ENCODE measurements at regions of chr4 and their contacts with region 1.

Region 1: DNA sequence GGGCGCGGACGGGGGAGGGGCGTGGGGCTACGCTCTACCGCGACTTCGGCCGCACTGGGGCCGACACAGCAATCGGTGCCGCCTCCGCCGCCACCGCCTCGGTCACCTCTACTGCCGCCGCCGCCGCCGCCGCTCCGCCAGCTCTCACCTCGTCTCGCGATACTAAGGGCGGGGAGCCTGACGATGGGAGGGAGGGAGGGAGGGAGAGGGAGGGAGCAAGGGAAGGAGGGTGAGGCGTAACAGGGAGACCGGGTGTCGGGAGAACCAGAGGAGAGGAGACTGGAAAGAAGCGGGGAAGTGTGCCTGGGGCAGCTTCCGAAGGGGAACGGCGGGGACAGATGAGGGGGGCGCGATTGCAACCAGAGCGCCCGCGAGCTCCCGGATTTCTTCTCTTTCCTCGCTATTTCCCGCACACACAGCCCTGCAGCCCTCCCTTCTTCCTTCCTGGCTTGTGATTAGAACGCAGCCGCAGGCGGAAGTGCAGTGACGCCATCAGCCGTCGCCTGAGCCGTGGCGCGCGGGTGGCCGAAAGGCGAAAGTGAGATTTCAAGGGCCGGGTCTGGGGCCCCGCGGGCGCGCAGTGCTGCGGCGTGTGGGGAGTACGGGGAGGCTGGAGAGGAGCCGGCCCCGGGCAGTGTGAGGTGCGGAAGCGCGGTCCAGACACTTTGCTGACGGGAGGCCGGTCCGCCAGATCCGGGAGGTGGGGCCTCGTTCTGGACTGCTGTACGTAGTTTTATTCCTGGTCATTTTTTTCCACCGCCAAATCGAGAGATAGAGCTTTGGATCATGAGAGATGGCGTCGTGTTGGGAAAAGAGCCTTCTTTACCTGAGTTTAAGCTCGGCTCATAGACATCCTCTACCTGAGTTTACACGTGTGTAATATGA is at the start of gene ANKRD17:
- DNase-seq: peak; percentile 77 to 95 (median 86)
- ATAC-seq: peak; percentile 74 to 80 (median 77)
- H3K4me3 ChIP-seq: peak within 1 kb of the TSS; percentile 73 to 94
- H3K4me3 Mint-ChIP-seq: peak within 1 kb of the TSS; percentile 90 to 99 (median 99)
- H3K27ac ChIP-seq: peak within 1 kb of the TSS; percentile 93
- H3K27ac Mint-ChIP-seq: peak within 1 kb of the TSS; percentile 100
- H3K4me1 ChIP-seq: peaks cover 19 to 29% of the 10 kb centered on the region in 2 experiments
- H3K4me1 Mint-ChIP-seq: peaks cover 65 to 73% (median 69%) of the 10 kb centered on the region in 3 donors
- H3K27me3 ChIP-seq: no peaks in the 10 kb centered on the region
- H3K27me3 Mint-ChIP-seq: no peaks in the 10 kb centered on the region
- total RNA-seq, gene ANKRD17: 48.6 to 63.8 (median 51.8) TPM

Region 2: DNA sequence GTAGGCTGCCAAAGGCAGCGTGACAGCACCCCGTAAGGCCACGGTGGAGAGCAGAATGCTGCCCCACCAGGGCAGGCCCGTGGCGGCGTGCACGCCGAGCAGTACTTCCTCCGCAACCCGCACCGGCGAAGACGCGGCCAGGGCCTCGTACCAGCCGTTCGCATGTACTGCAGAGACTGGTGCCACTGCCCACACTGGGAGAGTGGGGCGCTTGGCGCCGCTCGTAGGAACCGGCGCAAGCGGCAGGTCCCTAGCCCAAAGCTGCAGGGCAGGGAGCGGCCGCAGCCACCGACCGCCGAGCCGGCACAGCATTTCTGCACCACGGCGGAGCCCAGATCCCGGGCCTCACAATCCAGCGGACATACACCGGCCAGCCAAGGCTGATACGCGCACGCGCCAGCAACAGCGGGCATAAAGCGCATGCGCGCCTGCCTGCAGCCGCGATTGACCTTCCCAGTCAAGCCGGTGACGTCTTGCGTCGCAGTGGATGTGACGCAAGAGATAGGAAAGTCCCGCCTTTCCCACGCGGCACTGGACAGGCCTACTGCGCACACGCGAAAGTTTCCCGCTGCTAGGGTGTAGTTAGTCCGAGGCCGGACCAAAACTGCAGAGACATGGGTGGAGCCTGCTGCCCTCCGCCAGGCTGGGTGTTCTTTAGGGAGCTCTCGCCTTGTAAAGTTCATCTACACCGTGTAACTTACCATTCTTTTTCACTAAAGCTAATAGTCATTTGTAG is 189.4 kb before region 1 on chr4 and contains the start of gene COX18:
- CTCF ChIA-PET with region 1: interaction called, 8 to 12 read pairs
- POLR2A ChIA-PET with region 1: interaction called, 4 to 6 read pairs
- DNase-seq: peak; percentile 84 to 98 (median 89)
- ATAC-seq: peak; percentile 80 to 85 (median 84)
- H3K4me3 ChIP-seq: peak within 1 kb of the TSS; percentile 59 to 90
- H3K4me3 Mint-ChIP-seq: peak within 1 kb of the TSS; percentile 83 to 89 (median 88)
- H3K27ac ChIP-seq: peak within 1 kb of the TSS; percentile 98
- H3K27ac Mint-ChIP-seq: peak within 1 kb of the TSS; percentile 95 to 98
- H3K4me1 ChIP-seq: peaks cover 21 to 25% of the 10 kb centered on the region in 2 experiments
- H3K4me1 Mint-ChIP-seq: peaks cover 42 to 44% (median 42%) of the 10 kb centered on the region in 3 donors
- H3K27me3 ChIP-seq: no peaks in the 10 kb centered on the region
- H3K27me3 Mint-ChIP-seq: no peaks in the 10 kb centered on the region
- total RNA-seq, gene COX18: 11.5 to 18.3 (median 15.2) TPM

Region 3: GRCh38 chr4:73127839-73128453 is 131.0 kb before region 1 on chr4:
- CTCF ChIA-PET with region 1: interaction called, 7 to 17 read pairs
- POLR2A ChIA-PET with region 1: interaction called in 1 of 2 experiments, 3 read pairs
- DNase-seq: peak in 14 of 35 experiments; percentile 0 to 42 (median 6)
- ATAC-seq: peak; percentile 66 to 89 (median 68)
- H3K4me3 ChIP-seq: no peak overlapping the region
- H3K4me3 Mint-ChIP-seq: no peak overlapping the region
- H3K27ac ChIP-seq: no peak overlapping the region
- H3K27ac Mint-ChIP-seq: peak overlapping the region in 1 of 2 donors; percentile 41
- H3K4me1 ChIP-seq: no peaks in the 10 kb centered on the region
- H3K4me1 Mint-ChIP-seq: peaks cover 0 to 6% (median 3%) of the 10 kb centered on the region in 3 donors
- H3K27me3 ChIP-seq: no peaks in the 10 kb centered on the region
- H3K27me3 Mint-ChIP-seq: no peaks in the 10 kb centered on the region

Region 4: GRCh38 chr4:73152893-73153292 is 106.0 kb before region 1 on chr4:
- CTCF ChIA-PET with region 1: interaction called in 1 of 2 experiments, 11 read pairs
- POLR2A ChIA-PET with region 1: interaction called, 3 read pairs
- DNase-seq: no peak
- ATAC-seq: no peak
- H3K4me3 ChIP-seq: no peak overlapping the region
- H3K4me3 Mint-ChIP-seq: no peak overlapping the region
- H3K27ac ChIP-seq: no peak overlapping the region
- H3K27ac Mint-ChIP-seq: no peak overlapping the region
- H3K4me1 ChIP-seq: no peaks in the 10 kb centered on the region
- H3K4me1 Mint-ChIP-seq: peaks cover 0 to 6% (median 0%) of the 10 kb centered on the region in 3 donors
- H3K27me3 ChIP-seq: no peaks in the 10 kb centered on the region
- H3K27me3 Mint-ChIP-seq: no peaks in the 10 kb centered on the region

Region 5: DNA sequence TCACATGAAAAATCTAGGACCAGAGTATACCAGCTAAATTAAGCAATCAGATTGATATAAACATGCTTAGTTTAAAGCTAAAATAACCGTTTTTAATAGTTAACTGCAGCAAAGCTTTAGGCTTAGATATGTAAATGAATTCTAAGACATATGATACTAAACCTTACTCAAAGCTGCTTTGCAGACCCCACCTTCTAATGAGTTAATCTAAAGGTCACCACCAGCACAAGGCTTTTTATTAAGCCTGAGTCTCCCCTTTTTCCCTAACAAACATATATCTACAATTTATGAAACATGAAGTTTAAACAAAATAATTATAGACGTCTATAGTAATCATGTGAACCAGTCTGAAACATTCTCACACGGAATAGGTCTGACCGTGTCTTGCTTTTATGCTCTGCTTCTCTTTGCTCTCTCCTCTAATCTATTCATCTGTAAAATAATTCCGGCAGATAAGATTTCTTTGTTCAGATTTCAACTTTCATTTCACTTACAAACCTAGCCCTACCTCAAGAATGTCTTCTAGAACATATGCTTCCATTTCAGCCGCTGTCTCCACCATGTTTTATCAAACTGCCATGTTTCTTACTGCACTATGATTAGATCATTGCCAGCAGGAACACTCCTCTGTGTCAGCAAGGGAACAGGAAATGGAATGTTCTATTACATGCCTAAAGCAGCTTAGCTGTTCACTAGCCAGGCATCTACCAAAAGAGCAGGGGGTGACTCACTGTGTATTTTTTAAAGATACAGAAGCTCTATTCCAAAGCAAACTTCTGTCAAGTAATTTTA is 36.3 kb before region 1 on chr4:
- CTCF ChIA-PET with region 1: interaction called, 3 to 49 read pairs
- POLR2A ChIA-PET with region 1: interaction called, 7 to 31 read pairs
- DNase-seq: peak in 33 of 35 experiments; percentile 14 to 85 (median 55)
- ATAC-seq: peak; percentile 100
- H3K4me3 ChIP-seq: peak overlapping the region; percentile 52 to 72
- H3K4me3 Mint-ChIP-seq: no peak overlapping the region
- H3K27ac ChIP-seq: peak overlapping the region; percentile 82
- H3K27ac Mint-ChIP-seq: no peak overlapping the region
- H3K4me1 ChIP-seq: peaks cover 10 to 15% of the 10 kb centered on the region in 2 experiments
- H3K4me1 Mint-ChIP-seq: peaks cover 47 to 52% (median 48%) of the 10 kb centered on the region in 3 donors
- H3K27me3 ChIP-seq: no peaks in the 10 kb centered on the region
- H3K27me3 Mint-ChIP-seq: no peaks in the 10 kb centered on the region

Region 6: DNA sequence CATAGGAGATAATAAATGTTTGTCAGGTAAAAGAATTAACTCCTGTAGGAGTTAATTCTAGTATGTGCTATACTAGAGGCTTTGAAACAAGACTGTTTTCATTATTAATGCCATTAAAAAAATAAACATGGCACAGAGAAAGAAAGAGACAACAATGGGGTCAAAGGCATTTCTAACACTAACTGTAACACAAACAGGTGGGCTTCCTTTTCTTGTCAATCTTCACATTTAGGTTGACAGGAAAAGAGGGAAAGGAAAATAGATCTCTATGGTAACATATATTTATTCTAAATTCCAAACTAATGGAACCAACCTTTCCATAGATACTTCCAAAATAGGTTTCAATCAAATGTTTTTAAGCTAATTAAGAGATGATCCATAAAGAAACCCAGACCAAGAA is 10.1 kb before region 1 on chr4:
- CTCF ChIA-PET with region 1: interaction called in 1 of 2 experiments, 10 read pairs
- POLR2A ChIA-PET with region 1: interaction called in 1 of 2 experiments, 4 read pairs
- DNase-seq: no peak
- ATAC-seq: no peak
- H3K4me3 ChIP-seq: no peak overlapping the region
- H3K4me3 Mint-ChIP-seq: no peak overlapping the region
- H3K27ac ChIP-seq: no peak overlapping the region
- H3K27ac Mint-ChIP-seq: no peak overlapping the region
- H3K4me1 ChIP-seq: peaks cover 0 to 15% of the 10 kb centered on the region in 2 experiments
- H3K4me1 Mint-ChIP-seq: peaks cover 70 to 80% (median 75%) of the 10 kb centered on the region in 3 donors
- H3K27me3 ChIP-seq: no peaks in the 10 kb centered on the region
- H3K27me3 Mint-ChIP-seq: no peaks in the 10 kb centered on the region

Region 7: GRCh38 chr4:73662709-73663546 is 404.0 kb after region 1 on chr4:
- CTCF ChIA-PET with region 1: no interaction called
- POLR2A ChIA-PET with region 1: no interaction called
- DNase-seq: no peak
- ATAC-seq: no peak
- H3K4me3 ChIP-seq: no peak overlapping the region
- H3K4me3 Mint-ChIP-seq: no peak overlapping the region
- H3K27ac ChIP-seq: no peak overlapping the region
- H3K27ac Mint-ChIP-seq: no peak overlapping the region
- H3K4me1 ChIP-seq: no peaks in the 10 kb centered on the region
- H3K4me1 Mint-ChIP-seq: no peaks in the 10 kb centered on the region
- H3K27me3 ChIP-seq: no peaks in the 10 kb centered on the region
- H3K27me3 Mint-ChIP-seq: no peaks in the 10 kb centered on the region

Measured in T-cell (primary cell).